GM10248 (cell line): ENCODE measurements at regions of chr7 and their contacts with region 1.

Region 1: DNA sequence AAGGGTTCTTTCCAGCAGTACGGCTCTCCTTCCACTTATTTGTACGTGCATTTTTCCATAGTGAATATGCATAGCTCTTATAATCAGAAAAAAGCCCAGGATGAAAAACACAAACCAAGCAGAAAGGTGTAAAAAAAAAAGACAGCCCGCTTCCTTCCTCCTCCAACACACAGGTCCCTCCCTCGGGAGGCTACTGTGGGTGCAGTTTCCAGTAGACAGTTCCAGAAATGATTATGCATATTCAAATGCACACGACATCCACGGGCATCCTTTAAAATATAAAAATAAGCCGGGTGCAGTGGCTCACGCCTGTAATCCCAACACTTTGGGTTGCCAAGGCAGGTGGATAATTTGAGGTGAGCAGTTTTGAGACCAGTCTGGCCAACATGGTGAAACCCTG is 59.9 kb downstream of the TNRC18 start:
- DNase-seq: no peak
- CTCF ChIP-seq: no peak

Region 2: GRCh38 chr7:5375925-5376324 is 12.2 kb after region 1 on chr7:
- CTCF ChIA-PET with region 1: interaction called, 40 read pairs
- POLR2A ChIA-PET with region 1: no interaction called
- DNase-seq: no peak
- CTCF ChIP-seq: no peak

Region 3: GRCh38 chr7:5382281-5382892 is 18.7 kb after region 1 on chr7:
- CTCF ChIA-PET with region 1: interaction called, 40 read pairs
- POLR2A ChIA-PET with region 1: no interaction called
- DNase-seq: no peak
- CTCF ChIP-seq: no peak

Region 4: GRCh38 chr7:5396999-5397663 is 33.4 kb after region 1 on chr7:
- CTCF ChIA-PET with region 1: interaction called, 42 read pairs
- POLR2A ChIA-PET with region 1: no interaction called
- DNase-seq: peak; percentile 93
- CTCF ChIP-seq: no peak

Region 5: DNA sequence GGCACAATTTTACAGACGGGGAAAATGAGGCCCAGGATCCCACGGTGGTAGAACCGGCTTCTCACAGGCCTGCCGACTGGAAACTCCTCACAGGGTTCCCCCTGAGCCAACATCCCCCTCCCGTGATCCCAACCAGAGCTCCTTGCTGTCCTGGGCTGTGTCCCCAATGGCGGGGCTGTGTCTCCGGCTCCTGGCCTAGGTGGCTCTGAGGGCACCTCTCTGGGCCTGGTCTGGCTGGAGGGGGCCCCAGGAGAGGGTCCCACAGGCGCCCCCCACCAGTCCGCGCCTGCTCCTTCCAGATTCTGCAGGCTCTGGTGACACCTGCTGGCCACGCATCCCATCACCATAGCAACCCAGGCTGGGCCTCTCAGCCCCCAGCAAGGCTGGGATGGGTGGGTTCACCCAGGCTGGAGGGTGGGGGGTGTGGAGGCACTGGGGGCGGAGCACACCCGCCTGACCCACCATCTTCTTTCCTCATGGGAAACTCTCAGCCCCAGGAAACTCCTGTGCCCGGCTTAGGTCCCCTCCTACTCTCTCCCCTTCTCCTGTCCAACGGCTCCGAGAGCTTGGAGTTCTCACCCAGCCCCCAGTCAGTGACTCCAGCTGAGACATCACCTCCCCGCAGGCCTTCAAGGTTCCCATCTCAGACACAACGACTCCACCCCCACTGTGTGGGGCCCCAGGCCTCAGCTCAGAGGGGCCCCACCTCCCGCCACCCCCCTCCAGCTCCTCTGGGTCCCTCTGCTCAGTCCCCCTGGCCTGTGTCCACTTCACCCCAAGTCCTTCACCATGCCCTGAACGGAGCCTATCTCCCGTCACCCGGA is 87.0 kb after region 1 on chr7:
- CTCF ChIA-PET with region 1: interaction called, 11 read pairs
- POLR2A ChIA-PET with region 1: no interaction called
- DNase-seq: peak; percentile 74
- CTCF ChIP-seq: peak; percentile 59

Region 6: GRCh38 chr7:5995852-5996195 is 632.1 kb after region 1 on chr7:
- CTCF ChIA-PET with region 1: no interaction called
- POLR2A ChIA-PET with region 1: no interaction called
- DNase-seq: no peak
- CTCF ChIP-seq: no peak